Activated T-helper 2 cell treated with anti-CD3 and anti-CD28 coated beads, Interferon-gamma antibody, Interleukin-2, Interleukin-4, amounts not matched to agents 10 μg/mL and 5 μg/mL and 100 μg/mL, durations not matched to agents 14 hours and 24 hours and 36 hours (primary cell): ENCODE measurements at regions of chr2 and their contacts with region 1.

Region 1: GRCh38 chr2:231925303-231926179 is 655 bp downstream of the NPPC start:
- DNase-seq: peak; percentile 54
- H3K4me3 Mint-ChIP-seq: peak overlapping the region; percentile 26
- H3K27ac Mint-ChIP-seq: no peak overlapping the region
- H3K4me1 Mint-ChIP-seq: no peaks in the 10 kb centered on the region
- H3K27me3 Mint-ChIP-seq: peaks cover 52% of the 10 kb centered on the region

Region 2: GRCh38 chr2:232142049-232142448 is 216.5 kb after region 1 on chr2:
- intact Hi-C with region 1: loop called (anchors 5 kb)
- DNase-seq: no peak
- H3K4me3 Mint-ChIP-seq: no peak overlapping the region
- H3K27ac Mint-ChIP-seq: no peak overlapping the region
- H3K4me1 Mint-ChIP-seq: peaks cover 10% of the 10 kb centered on the region
- H3K27me3 Mint-ChIP-seq: peaks cover 2% of the 10 kb centered on the region

Region 3: GRCh38 chr2:232236200-232236599 is 310.7 kb after region 1 on chr2:
- intact Hi-C with region 1: loop called (anchors 5 kb)
- DNase-seq: no peak
- H3K4me3 Mint-ChIP-seq: no peak overlapping the region
- H3K27ac Mint-ChIP-seq: no peak overlapping the region
- H3K4me1 Mint-ChIP-seq: peaks cover 33% of the 10 kb centered on the region
- H3K27me3 Mint-ChIP-seq: no peaks in the 10 kb centered on the region

Region 4: GRCh38 chr2:233303252-233303651 is 1377.7 kb after region 1 on chr2:
- intact Hi-C with region 1: no loop called
- DNase-seq: no peak
- H3K4me3 Mint-ChIP-seq: no peak overlapping the region
- H3K27ac Mint-ChIP-seq: no peak overlapping the region
- H3K4me1 Mint-ChIP-seq: no peaks in the 10 kb centered on the region
- H3K27me3 Mint-ChIP-seq: no peaks in the 10 kb centered on the region